ENCODE measurements at regions of chr1 and their contacts with region 1.

Region 1: GRCh38 chr1:212782422-212783154 is 9.0 kb downstream of the NSL1 start:
- DNase-seq: no peak
- H3K4me3 ChIP-seq: no peak overlapping the region
- H3K27ac ChIP-seq: no peak overlapping the region
- H3K4me1 ChIP-seq: no peaks in the 10 kb centered on the region
- H3K27me3 ChIP-seq: no peaks in the 10 kb centered on the region
- CTCF ChIP-seq: peak in 2 of 3 experiments; percentile 19 to 55
- POLR2A ChIP-seq: no peak

Region 2: GRCh38 chr1:212542761-212543187 is 239.8 kb before region 1 on chr1:
- intact Hi-C with region 1: no loop called
- DNase-seq: no peak
- H3K4me3 ChIP-seq: no peak overlapping the region
- H3K27ac ChIP-seq: no peak overlapping the region
- H3K4me1 ChIP-seq: no peaks in the 10 kb centered on the region
- H3K27me3 ChIP-seq: no peaks in the 10 kb centered on the region
- CTCF ChIP-seq: no peak
- POLR2A ChIP-seq: no peak

Region 3: GRCh38 chr1:212665241-212666115 is 117.1 kb before region 1 on chr1:
- intact Hi-C with region 1: loop called (anchors 5 kb)
- DNase-seq: peak in 1 of 2 donors; percentile 91
- H3K4me3 ChIP-seq: peak overlapping the region; percentile 44 to 52
- H3K27ac ChIP-seq: peak overlapping the region; percentile 58
- H3K4me1 ChIP-seq: peaks cover 15% of the 10 kb centered on the region
- H3K27me3 ChIP-seq: no peaks in the 10 kb centered on the region
- CTCF ChIP-seq: peak; percentile 73 to 95 (median 91)
- POLR2A ChIP-seq: no peak

Region 4: DNA sequence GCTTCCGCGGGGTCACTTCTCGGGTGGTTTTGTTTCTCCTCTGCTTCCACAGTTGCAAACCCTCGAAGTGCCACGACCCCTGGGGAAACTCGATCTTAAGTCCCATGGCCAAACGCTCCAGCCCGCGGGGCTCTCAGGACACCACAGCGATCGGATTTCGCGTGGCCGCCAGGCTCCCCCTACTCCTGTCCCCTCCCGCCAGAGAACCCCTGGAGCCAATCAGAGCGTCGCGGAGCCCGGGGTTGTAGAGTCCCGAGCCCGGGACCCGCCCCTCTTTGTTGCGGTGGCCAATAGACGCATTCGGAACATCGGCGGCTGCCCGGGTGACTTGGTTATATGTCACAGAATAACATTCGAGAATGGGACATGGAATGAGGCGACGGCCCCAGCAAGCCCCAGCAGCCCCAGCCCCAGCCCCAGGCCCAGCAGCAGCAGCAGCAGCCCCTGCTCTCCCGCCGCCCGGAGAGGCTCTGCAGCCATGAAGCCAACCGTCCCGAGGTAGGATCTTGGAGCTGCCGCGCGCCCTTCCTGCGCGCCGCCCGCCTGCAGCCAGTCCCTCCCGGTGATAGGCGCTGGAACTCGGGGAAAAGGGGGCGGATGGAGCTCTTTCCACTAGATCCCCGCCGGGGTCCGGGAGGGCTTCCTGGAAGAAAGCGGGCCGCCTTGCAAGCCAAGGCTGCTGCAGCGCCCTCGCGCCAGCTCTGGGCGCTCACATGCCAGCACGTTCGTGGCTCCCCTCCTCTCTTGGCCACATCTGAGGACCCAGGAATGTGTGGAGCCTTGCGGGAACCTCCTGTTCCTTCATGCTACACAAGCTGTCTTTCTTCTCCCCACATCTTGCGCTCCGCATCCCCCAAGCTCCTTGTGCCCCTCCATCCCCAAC is 167.9 kb after region 1 on chr1 and contains the start of gene VASH2:
- intact Hi-C with region 1: no loop called
- DNase-seq: no peak
- H3K4me3 ChIP-seq: peak within 1 kb of the TSS; percentile 56 to 62
- H3K27ac ChIP-seq: peak within 1 kb of the TSS; percentile 54
- H3K4me1 ChIP-seq: peaks cover 27% of the 10 kb centered on the region
- H3K27me3 ChIP-seq: no peaks in the 10 kb centered on the region
- CTCF ChIP-seq: no peak
- POLR2A ChIP-seq: no peak
- total RNA-seq, gene VASH2: 4.2 TPM

Measured in vagina (tissue), 2 donors.